A549 (cell line): ENCODE measurements at regions of chr12 and their contacts with region 1.

Region 1: DNA sequence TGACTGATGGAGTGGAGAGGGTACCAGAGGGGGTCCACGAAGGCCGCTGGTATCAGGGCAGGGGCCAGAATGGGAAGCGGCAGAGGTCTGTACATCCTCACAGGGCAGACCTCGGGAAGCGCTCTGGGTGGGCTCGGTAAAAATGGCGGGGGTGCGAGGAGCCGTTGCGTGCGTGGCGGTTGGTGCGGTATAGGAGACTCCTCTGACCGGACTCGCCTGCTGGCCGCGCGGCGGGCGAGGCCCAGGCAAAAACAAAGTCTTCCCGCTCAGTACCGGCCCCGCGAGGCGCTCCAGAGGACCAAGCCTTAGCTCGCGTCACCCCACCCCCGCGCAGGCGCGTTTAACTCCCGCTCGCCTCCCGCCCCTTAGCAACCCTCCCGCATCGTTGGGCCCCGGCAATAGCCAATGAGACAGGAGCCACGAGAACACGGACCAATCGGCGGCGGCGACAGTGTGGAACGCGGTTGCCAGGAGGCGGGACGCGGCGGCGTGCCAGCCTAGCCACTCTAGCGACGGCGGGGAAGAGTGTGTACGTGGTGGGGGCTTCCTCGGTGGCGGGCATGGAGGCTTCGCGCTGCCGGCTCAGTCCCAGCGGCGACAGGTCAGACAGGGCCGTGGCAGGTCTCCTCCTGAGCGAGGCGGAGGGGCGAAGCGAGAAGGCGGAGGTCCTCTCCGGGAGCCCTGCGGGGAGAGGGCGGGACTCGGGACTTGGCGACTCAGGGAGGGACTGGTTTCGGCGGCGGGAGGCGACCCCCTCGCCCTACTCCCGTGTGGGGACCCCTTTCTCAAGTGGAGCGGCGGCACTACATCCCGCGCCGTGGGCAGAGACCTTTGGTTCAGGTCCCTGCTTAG is at the start of gene TULP3:
- DNase-seq: peak; percentile 96 to 98
- ATAC-seq: peak; percentile 95 to 96
- H3K4me3 ChIP-seq: peak within 1 kb of the TSS; percentile 86
- H3K27ac ChIP-seq: peak within 1 kb of the TSS; percentile 87 to 89
- H3K4me1 ChIP-seq: peaks cover 28% of the 10 kb centered on the region
- CTCF ChIP-seq: no peak
- EP300 ChIP-seq: no peak
- POLR2A ChIP-seq: peak; percentile 75
- RAD21 ChIP-seq: no peak
- polyA plus RNA-seq, gene TULP3: 30.6 and 32.9 TPM in 2 replicates

Region 2: GRCh38 chr12:2877047-2877952 is 13.3 kb before region 1 on chr12 and contains the starts of genes FOXM1 and RHNO1:
- CTCF ChIA-PET with region 1: interaction called, 17 read pairs
- POLR2A ChIA-PET with region 1: interaction called, 14 read pairs
- DNase-seq: peak; percentile 93 to 95
- ATAC-seq: peak; percentile 90 to 92
- H3K4me3 ChIP-seq: peak within 1 kb of the TSS; percentile 89
- H3K27ac ChIP-seq: peak within 1 kb of the TSS; percentile 95 to 96
- H3K4me1 ChIP-seq: peaks cover 12% of the 10 kb centered on the region
- CTCF ChIP-seq: no peak
- EP300 ChIP-seq: no peak
- POLR2A ChIP-seq: peak; percentile 70
- RAD21 ChIP-seq: no peak
- polyA plus RNA-seq, gene FOXM1: 40.3 and 47.8 TPM in 2 replicates
- polyA plus RNA-seq, gene RHNO1: 85.9 and 102 TPM in 2 replicates

Region 3: DNA sequence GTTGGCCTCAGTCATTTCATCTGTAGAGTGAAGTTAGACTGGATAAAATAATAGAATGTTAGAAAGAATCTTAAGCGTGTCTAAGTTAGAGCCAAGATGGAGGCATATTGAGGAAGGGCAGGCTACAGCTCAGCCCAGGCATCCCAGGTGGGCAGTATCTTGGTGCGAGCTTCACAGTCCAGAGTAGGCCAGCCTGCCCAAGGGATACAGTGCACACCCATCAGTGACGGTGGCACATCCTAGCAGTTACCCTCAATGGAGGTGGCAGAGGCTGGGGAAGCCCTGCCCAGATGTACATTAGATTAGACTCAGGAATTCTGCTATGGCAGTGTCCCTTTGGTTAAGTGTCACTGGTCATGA is 21.6 kb after region 1 on chr12:
- CTCF ChIA-PET with region 1: no interaction called
- POLR2A ChIA-PET with region 1: no interaction called
- DNase-seq: no peak
- ATAC-seq: peak in 1 of 2 experiments; percentile 30; a peak in 1 of 6 replicates
- H3K4me3 ChIP-seq: no peak overlapping the region
- H3K27ac ChIP-seq: no peak overlapping the region
- H3K4me1 ChIP-seq: no peaks in the 10 kb centered on the region
- CTCF ChIP-seq: no peak
- EP300 ChIP-seq: no peak
- POLR2A ChIP-seq: no peak
- RAD21 ChIP-seq: no peak